Activated CD4-positive, alpha-beta memory T cell treated with anti-CD3 and anti-CD28 coated beads, Interleukin-2, amount 10 ng/mL, durations not matched to agents 7 days and 5 days (primary cell): ENCODE measurements at regions of chr20 and their contacts with region 1.

Region 1: GRCh38 chr20:13784893-13785715 is at the starts of genes ESF1 and NDUFAF5:
- DNase-seq: peak; percentile 94
- H3K4me3 Mint-ChIP-seq: peak within 1 kb of the TSS; percentile 97
- H3K27ac Mint-ChIP-seq: peak within 1 kb of the TSS; percentile 87
- H3K4me1 Mint-ChIP-seq: peaks cover 54% of the 10 kb centered on the region
- H3K27me3 Mint-ChIP-seq: no peaks in the 10 kb centered on the region
- total RNA-seq, gene ESF1: 10.1 to 10.6 TPM
- total RNA-seq, gene NDUFAF5: 24.1 to 29.4 TPM

Region 2: DNA sequence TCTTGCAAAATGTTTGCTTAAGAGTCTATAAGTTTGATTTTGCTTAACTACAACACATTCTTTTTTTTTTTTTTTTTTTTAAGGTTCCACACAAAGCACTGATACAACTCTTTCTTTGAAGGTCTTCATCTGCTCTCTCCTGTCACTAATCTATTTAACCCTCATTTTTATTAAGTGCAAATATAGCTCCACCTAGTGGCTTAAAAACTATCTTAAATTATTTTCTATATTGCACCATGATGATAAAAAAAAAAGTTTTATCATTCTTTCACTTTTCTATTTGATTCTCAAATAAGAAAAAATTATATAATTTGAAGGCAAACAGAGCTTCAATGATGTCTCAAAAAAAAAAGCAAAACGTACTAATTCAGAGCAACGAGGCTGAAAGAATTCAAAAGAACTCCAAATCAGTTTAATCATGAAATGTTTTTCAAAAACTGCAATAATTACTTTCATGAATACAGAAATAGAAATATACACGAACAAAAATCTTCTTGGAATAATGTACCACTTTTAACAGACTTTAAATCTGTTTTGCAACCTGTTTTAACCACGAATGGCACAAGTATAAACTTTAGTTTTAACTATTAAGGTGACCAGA is 13.2 kb before region 1 on chr20:
- CTCF ChIA-PET with region 1: interaction called, 47 read pairs
- POLR2A ChIA-PET with region 1: interaction called, 12 read pairs
- DNase-seq: no peak
- H3K4me3 Mint-ChIP-seq: no peak overlapping the region
- H3K27ac Mint-ChIP-seq: no peak overlapping the region
- H3K4me1 Mint-ChIP-seq: peaks cover 8% of the 10 kb centered on the region
- H3K27me3 Mint-ChIP-seq: no peaks in the 10 kb centered on the region